ENCODE measurements at regions of chr4 and their contacts with region 1.

Region 1: GRCh38 chr4:71184195-71184781 is 154.5 kb upstream of the SLC4A4 start:
- DNase-seq: peak; percentile 40 to 68
- ATAC-seq: no peak

Region 2: DNA sequence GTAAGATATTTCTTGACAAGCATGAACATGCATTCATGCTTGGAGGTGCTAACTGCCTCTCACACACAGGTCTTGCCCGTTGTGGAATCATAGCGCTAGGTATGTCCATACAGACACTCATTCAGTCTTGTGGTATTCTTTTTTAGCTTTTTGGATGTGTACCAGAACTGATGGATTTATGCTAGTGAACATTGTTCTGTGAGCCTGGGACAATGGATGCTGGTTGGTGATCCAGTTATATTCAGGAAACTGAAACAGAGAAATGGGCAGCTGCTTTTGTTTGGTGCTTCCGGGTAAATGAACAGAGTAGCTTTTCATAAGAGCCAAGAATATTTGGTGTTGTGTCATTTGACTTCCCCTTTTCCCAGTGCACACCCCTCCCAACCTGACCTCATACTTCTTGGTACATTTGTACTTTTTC is 75.6 kb after region 1 on chr4:
- intact Hi-C with region 1: no loop called
- DNase-seq: no peak
- ATAC-seq: peak; percentile 44

Region 3: DNA sequence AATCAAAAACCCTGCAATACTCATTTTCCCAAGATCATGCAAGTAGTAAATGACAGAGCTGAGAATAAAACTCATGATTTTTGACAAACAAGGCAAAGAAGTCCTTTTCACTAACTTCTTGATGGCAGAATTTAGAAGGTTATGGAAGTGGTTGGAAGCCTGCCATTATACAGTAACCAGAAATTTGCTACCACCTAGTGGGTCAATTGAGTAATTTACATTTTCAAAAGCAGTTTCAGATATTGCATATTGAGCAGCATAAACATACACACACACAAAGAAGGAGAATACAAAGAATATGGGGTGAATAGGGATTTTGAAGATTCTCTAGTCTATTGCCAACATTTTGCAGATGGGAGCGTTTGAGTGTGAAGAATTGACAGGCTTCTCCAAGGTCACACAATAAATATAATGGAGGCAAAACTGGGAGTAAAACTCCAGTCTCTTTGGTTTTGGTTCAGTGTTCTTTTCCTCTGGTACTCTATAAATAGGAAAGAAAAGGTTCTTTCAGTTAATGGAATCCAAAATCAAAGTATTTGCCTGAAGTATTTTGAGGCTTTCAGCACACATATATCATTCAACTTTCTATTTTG is 529.4 kb after region 1 on chr4:
- intact Hi-C with region 1: loop called in 1 of 2 experiments (anchors 5 kb)
- DNase-seq: no peak
- ATAC-seq: no peak

Measured in left colon (tissue), 2 donors.